GM13977 (cell line): ENCODE measurements at regions of chr12 and their contacts with region 1.

Region 1: GRCh38 chr12:7108796-7109571 is at the start of gene C1RL:
- DNase-seq: peak; percentile 64
- CTCF ChIP-seq: peak; percentile 95

Region 2: GRCh38 chr12:6937481-6938297 is 171.3 kb before region 1 on chr12:
- in situ Hi-C with region 1: loop called (anchors 25 kb)
- DNase-seq: peak; percentile 91
- CTCF ChIP-seq: peak; percentile 97